Heart left ventricle (tissue), 16 donors: ENCODE measurements at regions of chr2 and their contacts with region 1.

Region 1: DNA sequence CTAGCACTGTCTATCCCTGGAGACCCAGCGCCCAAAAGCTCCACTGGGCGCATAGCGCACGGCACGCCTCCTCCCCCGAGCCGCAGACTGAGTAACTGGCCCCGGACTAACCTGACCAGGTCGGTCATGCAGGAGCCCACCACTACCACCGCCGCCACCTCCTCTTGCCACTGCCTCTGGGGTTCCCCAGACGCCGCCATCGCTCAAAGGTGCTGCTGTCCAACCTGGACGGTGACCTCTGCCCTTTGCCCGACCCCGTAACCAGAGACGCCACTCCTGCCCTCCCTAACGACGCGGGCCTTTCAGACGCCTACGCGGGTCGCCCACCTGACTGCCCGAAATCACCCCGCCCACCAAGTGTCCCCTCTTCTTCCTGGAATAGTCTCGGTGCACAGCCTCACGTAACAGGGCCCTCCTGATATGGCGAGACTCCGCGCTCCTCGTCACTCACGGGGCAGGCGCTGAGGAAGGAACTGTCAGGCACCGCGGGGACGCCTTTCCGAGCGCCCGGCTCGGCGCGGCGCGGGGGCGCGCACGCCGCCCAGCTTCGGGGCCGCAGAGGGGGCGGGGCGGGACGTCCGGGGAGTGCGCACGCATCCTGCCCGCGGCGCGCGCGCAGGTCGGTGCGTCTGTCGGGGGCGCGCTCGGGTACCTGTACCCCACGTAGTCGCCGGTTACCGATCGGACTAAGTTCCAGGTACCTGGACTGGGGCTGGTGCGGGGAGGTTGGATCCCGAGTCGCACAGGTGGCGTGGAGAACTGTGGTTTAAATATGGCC is at the starts of genes BABAM2 and RBKS:
- DNase-seq: peak; percentile 87 to 93 (median 91)
- ATAC-seq: peak; percentile 87 to 98 (median 94)
- H3K4me3 ChIP-seq: peak within 1 kb of the TSS; percentile 57 to 94 (median 80)
- H3K27ac ChIP-seq: peak within 1 kb of the TSS; percentile 85 to 99 (median 94)
- H3K4me1 ChIP-seq: peaks cover 0 to 54% (median 22%) of the 10 kb centered on the region in 12 donors
- H3K27me3 ChIP-seq: no peaks in the 10 kb centered on the region
- CTCF ChIP-seq: peak in 1 of 12 donors; percentile 9
- POLR2A ChIP-seq: peak in 1 of 2 donors; percentile 72
- total RNA-seq, gene BABAM2: 55.1 to 75.1 (median 64.4) TPM
- total RNA-seq, gene RBKS: 2.0 to 6.0 (median 4.1) TPM

Region 2: DNA sequence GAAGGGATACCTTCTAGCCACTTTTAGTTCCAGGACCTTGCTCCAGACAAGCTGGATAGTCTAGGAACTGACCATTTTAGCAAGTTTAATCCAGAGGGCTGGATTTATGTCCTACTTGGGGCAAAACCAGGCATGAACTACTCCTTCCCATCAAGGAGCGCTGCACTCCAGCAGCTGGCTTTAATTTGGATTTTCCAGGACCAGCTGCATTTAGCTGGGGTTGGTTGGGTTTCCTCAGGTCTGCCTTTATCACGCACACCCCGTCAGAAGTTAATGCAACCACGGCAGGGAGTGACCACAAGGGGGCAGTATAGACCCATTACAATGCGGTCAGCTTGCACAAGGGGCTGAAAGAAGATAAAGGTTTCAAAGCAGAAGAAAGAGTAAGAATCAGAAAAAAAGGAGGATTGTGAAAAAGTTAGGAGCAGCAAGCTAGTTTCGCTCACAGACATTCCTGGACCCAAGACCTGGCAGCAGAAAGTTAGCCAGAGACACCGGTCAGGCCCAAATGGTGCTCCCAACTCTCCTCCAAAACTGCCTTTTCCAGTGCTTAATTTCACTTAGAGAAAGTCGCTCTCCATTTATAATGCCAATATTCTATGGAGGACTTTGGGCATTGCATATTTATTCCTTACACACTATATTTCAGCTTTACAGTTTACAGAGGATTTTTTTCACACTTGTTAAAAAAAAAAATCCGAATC is 186.5 kb before region 1 on chr2:
- intact Hi-C with region 1: loop called in 1 of 10 experiments (anchors 5 kb)
- DNase-seq: peak; percentile 74 to 83 (median 79)
- ATAC-seq: peak; percentile 48 to 66 (median 56)
- H3K4me3 ChIP-seq: no peak overlapping the region
- H3K27ac ChIP-seq: peak overlapping the region in 2 of 12 donors; percentile 8 to 82
- H3K4me1 ChIP-seq: peaks cover 0 to 42% (median 26%) of the 10 kb centered on the region in 12 donors
- H3K27me3 ChIP-seq: no peaks in the 10 kb centered on the region
- CTCF ChIP-seq: peak; percentile 89 to 97 (median 94)
- POLR2A ChIP-seq: no peak

Region 3: GRCh38 chr2:27723372-27724144 is 166.8 kb before region 1 on chr2:
- intact Hi-C with region 1: loop called in 3 of 10 experiments (anchors 5 to 10 kb)
- DNase-seq: peak; percentile 68 to 78 (median 73)
- ATAC-seq: peak; percentile 41 to 71 (median 64)
- H3K4me3 ChIP-seq: no peak overlapping the region
- H3K27ac ChIP-seq: peak overlapping the region; percentile 6 to 94 (median 72)
- H3K4me1 ChIP-seq: peaks cover 0 to 59% (median 37%) of the 10 kb centered on the region in 12 donors
- H3K27me3 ChIP-seq: no peaks in the 10 kb centered on the region
- CTCF ChIP-seq: peak; percentile 63 to 91 (median 85)
- POLR2A ChIP-seq: no peak

Region 4: GRCh38 chr2:27798948-27799645 is 91.2 kb before region 1 on chr2:
- intact Hi-C with region 1: loop called in 3 of 10 experiments (anchors 1 to 10 kb)
- DNase-seq: peak in 4 of 5 donors; percentile 38 to 84 (median 56)
- ATAC-seq: peak; percentile 30 to 72 (median 56)
- H3K4me3 ChIP-seq: no peak overlapping the region
- H3K27ac ChIP-seq: peak overlapping the region; percentile 43 to 98 (median 88)
- H3K4me1 ChIP-seq: peaks cover 5 to 64% (median 48%) of the 10 kb centered on the region in 12 donors
- H3K27me3 ChIP-seq: no peaks in the 10 kb centered on the region
- CTCF ChIP-seq: no peak
- POLR2A ChIP-seq: no peak

Region 5: DNA sequence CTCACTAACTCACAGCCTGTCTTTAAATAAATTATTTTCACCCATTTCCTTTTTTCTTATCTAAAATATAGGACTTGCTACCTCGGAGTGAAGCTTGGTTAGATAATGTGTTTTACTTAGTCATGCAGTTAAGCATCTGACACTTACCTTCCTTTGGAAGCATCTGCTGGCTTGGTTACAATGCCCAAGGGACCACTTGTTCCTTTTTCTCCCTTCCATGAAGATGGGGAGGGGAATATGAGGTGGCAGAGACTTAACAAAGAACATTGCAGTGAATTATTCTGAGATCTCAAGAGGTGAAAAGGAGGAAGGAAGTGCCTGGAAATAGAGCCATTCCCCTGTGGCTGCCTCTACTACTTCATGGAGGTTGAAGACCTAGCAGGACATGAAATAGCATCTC is 357.0 kb after region 1 on chr2:
- intact Hi-C with region 1: loop called in 1 of 10 experiments (anchors 10 kb)
- DNase-seq: no peak
- ATAC-seq: peak in 2 of 4 donors; percentile 36 to 75
- H3K4me3 ChIP-seq: no peak overlapping the region
- H3K27ac ChIP-seq: peak overlapping the region in 6 of 12 donors; percentile 10 to 50 (median 24)
- H3K4me1 ChIP-seq: peaks cover 0 to 16% (median 12%) of the 10 kb centered on the region in 12 donors
- H3K27me3 ChIP-seq: no peaks in the 10 kb centered on the region
- CTCF ChIP-seq: no peak
- POLR2A ChIP-seq: no peak